HCT116 (cell line): ENCODE measurements at regions of chr10 and their contacts with region 1.

Region 1: GRCh38 chr10:28179006-28179742 is 123.7 kb downstream of the MPP7 start:
- DNase-seq: peak; percentile 69
- ATAC-seq: peak; percentile 57
- H3K4me3 ChIP-seq: peak overlapping the region; percentile 31 to 42; a peak in 3 of 4 replicates
- H3K27ac ChIP-seq: peak overlapping the region; percentile 94
- H3K4me1 ChIP-seq: peaks cover 79% of the 10 kb centered on the region in 2 experiments
- H3K27me3 ChIP-seq: no peaks in the 10 kb centered on the region
- CTCF ChIP-seq: peak; percentile 45 to 77 (median 75)
- POLR2A ChIP-seq: no peak
- RAD21 ChIP-seq: peak; percentile 95

Region 2: GRCh38 chr10:27558612-27559020 is 620.6 kb before region 1 on chr10:
- CTCF ChIA-PET with region 1: interaction called, 4 read pairs
- POLR2A ChIA-PET with region 1: no interaction called
- RAD21 ChIA-PET with region 1: interaction called in 1 of 2 experiments, 3 read pairs
- intact Hi-C with region 1: loop called (anchors 2 kb)
- DNase-seq: peak; percentile 58
- ATAC-seq: peak; percentile 87
- H3K4me3 ChIP-seq: no peak overlapping the region
- H3K27ac ChIP-seq: no peak overlapping the region; the same call in 1 of the 2 replicates
- H3K4me1 ChIP-seq: peaks cover 0 to 8% of the 10 kb centered on the region in 2 experiments; a peak in 2 of 4 replicates
- H3K27me3 ChIP-seq: no peaks in the 10 kb centered on the region
- CTCF ChIP-seq: peak; percentile 70 to 85 (median 76); a peak in 5 of 6 replicates
- POLR2A ChIP-seq: no peak
- RAD21 ChIP-seq: peak; percentile 93

Region 3: GRCh38 chr10:27742195-27743011 is 436.8 kb before region 1 on chr10:
- CTCF ChIA-PET with region 1: no interaction called
- POLR2A ChIA-PET with region 1: no interaction called
- RAD21 ChIA-PET with region 1: no interaction called
- intact Hi-C with region 1: loop called (anchors 5 kb)
- DNase-seq: peak; percentile 67
- ATAC-seq: peak; percentile 78
- H3K4me3 ChIP-seq: peak overlapping the region; percentile 46 to 57
- H3K27ac ChIP-seq: peak overlapping the region; percentile 97
- H3K4me1 ChIP-seq: peaks cover 13 to 17% of the 10 kb centered on the region in 2 experiments; a peak in 3 of 4 replicates
- H3K27me3 ChIP-seq: no peaks in the 10 kb centered on the region
- CTCF ChIP-seq: peak; percentile 31 to 63 (median 59); a peak in 5 of 6 replicates
- POLR2A ChIP-seq: no peak
- RAD21 ChIP-seq: peak; percentile 68

Region 4: DNA sequence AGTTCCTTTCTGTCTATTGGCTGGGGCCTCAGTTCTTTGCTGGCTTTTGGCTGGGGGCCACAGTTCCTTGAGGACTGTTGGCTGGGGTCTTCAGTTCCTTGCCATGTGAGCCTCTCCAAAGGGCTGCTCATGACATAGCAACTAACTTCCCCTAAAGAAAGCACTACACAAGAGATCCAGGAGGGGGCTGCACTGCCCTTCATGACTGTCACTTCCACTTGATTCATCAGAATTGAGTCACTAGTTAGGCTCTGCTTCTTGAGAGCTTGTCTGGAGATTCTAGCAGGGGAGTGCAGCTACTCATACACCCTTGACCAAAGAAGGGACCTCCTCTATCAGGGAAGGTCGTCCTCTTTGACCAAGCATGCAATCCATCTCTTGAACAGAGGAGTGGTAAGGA is 395.5 kb before region 1 on chr10:
- CTCF ChIA-PET with region 1: interaction called, 20 read pairs
- POLR2A ChIA-PET with region 1: no interaction called
- RAD21 ChIA-PET with region 1: interaction called, 4 to 6 read pairs
- intact Hi-C with region 1: loop called (anchors 1 kb)
- DNase-seq: peak; percentile 81
- ATAC-seq: peak; percentile 98
- H3K4me3 ChIP-seq: no peak overlapping the region
- H3K27ac ChIP-seq: peak overlapping the region; percentile 52
- H3K4me1 ChIP-seq: peaks cover 7 to 20% of the 10 kb centered on the region in 2 experiments; a peak in 3 of 4 replicates
- H3K27me3 ChIP-seq: no peaks in the 10 kb centered on the region
- CTCF ChIP-seq: peak; percentile 71 to 74 (median 74); a peak in 5 of 6 replicates
- POLR2A ChIP-seq: no peak
- RAD21 ChIP-seq: peak; percentile 92

Region 5: GRCh38 chr10:27893358-27893954 is 285.7 kb before region 1 on chr10:
- CTCF ChIA-PET with region 1: no interaction called
- POLR2A ChIA-PET with region 1: no interaction called
- RAD21 ChIA-PET with region 1: no interaction called
- intact Hi-C with region 1: loop called (anchors 10 kb)
- DNase-seq: peak; percentile 84
- ATAC-seq: peak; percentile 89
- H3K4me3 ChIP-seq: peak overlapping the region in 1 of 2 experiments; percentile 24; a peak in 2 of 4 replicates
- H3K27ac ChIP-seq: peak overlapping the region; percentile 62
- H3K4me1 ChIP-seq: peaks cover 30 to 41% of the 10 kb centered on the region in 2 experiments
- H3K27me3 ChIP-seq: no peaks in the 10 kb centered on the region
- CTCF ChIP-seq: no peak
- POLR2A ChIP-seq: no peak
- RAD21 ChIP-seq: peak; percentile 22

Region 6: DNA sequence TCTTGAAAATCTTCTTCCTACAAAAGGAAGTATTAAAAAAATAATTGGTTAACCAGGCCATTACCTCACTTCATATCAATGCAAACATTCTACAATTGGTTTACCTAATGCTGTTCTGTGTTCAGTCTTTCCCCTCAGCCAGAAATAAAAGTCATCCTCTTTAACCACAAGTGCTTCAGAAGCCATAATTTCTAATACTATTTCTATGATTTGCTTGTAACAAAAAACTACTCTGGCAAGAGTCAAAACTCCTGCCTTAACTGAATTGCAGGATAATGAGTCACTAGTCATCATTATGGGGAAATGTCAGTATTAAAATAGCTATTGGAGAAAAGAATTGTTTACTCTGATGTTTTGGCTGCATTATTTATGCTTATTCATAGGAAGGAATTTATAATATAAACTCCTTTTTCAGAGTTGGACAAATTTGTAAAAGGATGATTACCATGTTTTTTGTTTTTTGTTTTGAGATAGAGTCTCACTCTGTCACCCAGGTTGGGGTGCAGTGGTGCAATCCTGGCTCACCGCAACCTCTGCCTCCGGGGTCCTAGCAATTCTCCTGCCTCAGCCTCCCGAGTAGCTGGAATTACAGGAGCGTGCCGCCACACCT is 124.8 kb before region 1 on chr10:
- CTCF ChIA-PET with region 1: interaction called, 5 read pairs
- POLR2A ChIA-PET with region 1: no interaction called
- RAD21 ChIA-PET with region 1: no interaction called
- intact Hi-C with region 1: loop called (anchors 10 kb)
- DNase-seq: peak; percentile 42
- ATAC-seq: peak; percentile 69
- H3K4me3 ChIP-seq: no peak overlapping the region; a peak in 1 of 4 replicates
- H3K27ac ChIP-seq: peak overlapping the region; percentile 98
- H3K4me1 ChIP-seq: peaks cover 37 to 49% of the 10 kb centered on the region in 2 experiments
- H3K27me3 ChIP-seq: no peaks in the 10 kb centered on the region
- CTCF ChIP-seq: no peak
- POLR2A ChIP-seq: no peak
- RAD21 ChIP-seq: no peak